Keratinocyte (primary cell): ENCODE measurements at regions of chr14 and their contacts with region 1.

Region 1: DNA sequence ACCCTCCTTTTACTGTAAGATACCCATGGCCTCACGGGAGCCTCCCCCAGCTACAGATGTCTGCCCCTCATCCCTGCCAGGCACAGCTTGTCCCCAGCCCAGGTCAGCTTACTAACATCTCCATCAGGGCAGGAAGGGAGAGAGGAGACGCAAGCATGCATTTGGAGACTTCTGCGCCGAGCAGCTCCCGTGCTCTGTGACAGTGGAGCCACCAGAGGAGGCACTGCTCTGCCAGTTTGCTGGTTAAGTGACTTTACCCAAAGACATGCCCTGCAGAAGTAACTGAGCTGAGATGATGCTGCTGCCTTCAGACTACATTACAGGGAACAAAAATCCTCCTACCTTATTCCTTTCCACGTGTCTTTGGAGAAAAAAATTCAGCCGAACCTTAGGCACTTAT is 133.4 kb downstream of the ESRRB start:
- DNase-seq: no peak
- H3K4me3 ChIP-seq: no peak overlapping the region
- H3K27ac ChIP-seq: no peak overlapping the region
- H3K4me1 ChIP-seq: no peaks in the 10 kb centered on the region
- H3K27me3 ChIP-seq: no peaks in the 10 kb centered on the region
- CTCF ChIP-seq: peak in 1 of 3 experiments; percentile 29

Region 2: DNA sequence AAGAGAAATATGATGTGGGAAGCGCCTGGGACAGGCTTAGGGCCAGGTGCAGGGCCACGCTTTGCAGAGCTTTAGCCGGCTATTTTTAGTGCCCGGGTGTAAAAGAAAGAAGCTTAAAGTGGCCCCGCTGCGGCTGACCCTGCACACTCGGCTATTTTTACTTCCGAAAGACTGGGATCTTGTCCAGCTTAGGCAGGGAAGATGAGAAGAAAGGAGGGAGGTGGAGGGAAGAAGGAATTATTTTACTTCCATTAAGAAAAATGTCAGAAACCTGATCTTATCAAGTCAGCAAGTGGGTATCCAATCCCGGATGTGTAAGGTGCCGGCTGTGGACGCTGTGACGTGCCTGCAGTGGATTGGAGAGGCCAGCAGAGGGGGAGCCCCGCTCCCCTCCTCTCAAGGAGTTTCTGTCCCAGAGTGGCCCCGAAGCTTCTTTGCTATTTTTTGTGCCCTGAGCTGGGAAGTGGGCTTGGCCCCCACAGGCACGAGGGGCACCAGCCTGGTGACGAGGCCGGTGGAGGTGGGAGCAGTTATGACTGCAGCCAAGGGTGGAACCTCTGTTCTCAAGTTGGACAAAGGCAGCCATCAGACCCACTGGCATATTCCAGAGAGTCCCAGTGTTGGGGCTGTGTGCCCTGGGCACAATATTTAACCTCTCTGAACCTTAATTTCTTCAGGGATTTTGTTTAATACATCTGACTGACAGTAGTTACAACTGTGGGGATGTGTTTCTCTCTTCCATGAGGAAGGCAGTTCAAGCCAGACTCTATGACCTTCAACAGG is 35.6 kb before region 1 on chr14:
- dilution Hi-C with region 1: loop called (anchors 5 kb)
- DNase-seq: no peak
- H3K4me3 ChIP-seq: no peak overlapping the region
- H3K27ac ChIP-seq: no peak overlapping the region
- H3K4me1 ChIP-seq: no peaks in the 10 kb centered on the region
- H3K27me3 ChIP-seq: peaks cover 7% of the 10 kb centered on the region
- CTCF ChIP-seq: peak in 1 of 3 experiments; percentile 23